SK-N-SH (cell line): ENCODE measurements at regions of chr7 and their contacts with region 1.

Region 1: GRCh38 chr7:39580149-39580874 is 14.1 kb downstream of the YAE1 start:
- DNase-seq: peak; percentile 88
- H3K4me3 ChIP-seq: no peak overlapping the region
- H3K27ac ChIP-seq: 0 out of 4 replicates have a peak overlapping the region, but pooled peaks of 1 of the 2 experiments have one; percentile 6
- H3K4me1 ChIP-seq: no peaks in the 10 kb centered on the region
- H3K27me3 ChIP-seq: no peaks in the 10 kb centered on the region
- CTCF ChIP-seq: peak; percentile 96
- EP300 ChIP-seq: no peak
- RAD21 ChIP-seq: peak; percentile 100

Region 2: GRCh38 chr7:39488467-39489393 is 91.6 kb before region 1 on chr7:
- CTCF ChIA-PET with region 1: no interaction called
- POLR2A ChIA-PET with region 1: no interaction called
- DNase-seq: no peak
- H3K4me3 ChIP-seq: no peak overlapping the region
- H3K27ac ChIP-seq: no peak overlapping the region
- H3K4me1 ChIP-seq: no peaks in the 10 kb centered on the region; a peak in 1 of 4 replicates
- H3K27me3 ChIP-seq: peaks cover 21% of the 10 kb centered on the region; the same call in 1 of the 2 replicates
- CTCF ChIP-seq: no peak
- EP300 ChIP-seq: no peak
- RAD21 ChIP-seq: no peak

Region 3: DNA sequence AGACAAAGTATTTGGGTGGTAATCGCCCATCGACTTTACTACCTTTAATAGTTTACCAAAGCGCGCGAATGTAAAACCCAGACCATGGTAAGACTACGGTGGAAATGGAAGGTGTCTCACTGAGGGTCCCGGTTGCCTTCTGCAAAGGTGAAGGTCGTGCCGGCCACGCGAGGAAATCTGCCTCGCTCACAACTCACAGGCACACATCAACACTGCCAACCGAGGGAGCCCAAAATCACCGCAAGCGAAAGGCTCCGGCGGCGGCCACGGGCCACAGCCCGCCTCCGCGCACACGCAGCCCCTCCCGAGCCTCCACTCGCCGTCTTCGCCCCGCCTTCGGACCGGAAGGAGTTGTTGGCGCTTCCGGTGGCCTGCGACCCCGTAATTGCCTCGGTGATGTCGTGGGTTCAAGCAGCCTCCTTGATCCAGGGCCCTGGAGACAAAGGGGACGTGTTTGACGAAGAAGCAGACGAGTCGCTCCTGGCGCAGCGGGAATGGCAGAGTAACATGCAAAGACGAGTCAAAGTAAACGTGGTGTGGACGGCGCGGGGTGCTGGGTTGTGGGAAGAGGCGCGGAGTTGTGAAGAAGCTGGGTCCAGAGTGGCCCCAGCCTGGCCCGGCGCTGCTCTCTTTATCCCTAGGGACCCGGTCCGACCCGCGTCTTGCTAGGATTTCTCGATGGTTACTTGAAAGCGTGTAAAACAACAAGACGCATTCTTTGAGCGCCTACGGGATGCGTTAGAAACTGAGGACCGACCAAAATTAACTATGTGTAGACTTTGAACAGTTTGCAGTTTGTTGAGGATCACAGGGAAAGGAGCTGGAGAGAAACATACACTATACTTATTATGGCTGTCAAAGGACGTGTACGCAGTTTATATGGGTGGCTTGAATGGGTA is 14.0 kb before region 1 on chr7 and contains the start of gene YAE1:
- CTCF ChIA-PET with region 1: interaction called, 26 read pairs
- POLR2A ChIA-PET with region 1: interaction called, 6 read pairs
- DNase-seq: peak; percentile 98
- H3K4me3 ChIP-seq: peak within 1 kb of the TSS; percentile 72 to 94
- H3K27ac ChIP-seq: peak within 1 kb of the TSS; percentile 69 to 79
- H3K4me1 ChIP-seq: peaks cover 6 to 12% of the 10 kb centered on the region in 2 experiments; a peak in 2 of 4 replicates
- H3K27me3 ChIP-seq: no peaks in the 10 kb centered on the region
- CTCF ChIP-seq: no peak
- EP300 ChIP-seq: peak in 1 of 2 experiments; percentile 26; a peak in 2 of 4 replicates
- RAD21 ChIP-seq: no peak
- polyA plus RNA-seq, gene YAE1: 30.7 and 39.8 TPM in 2 replicates

Region 4: GRCh38 chr7:39623018-39623731 is 42.9 kb after region 1 on chr7 and contains the start of gene RALA:
- CTCF ChIA-PET with region 1: interaction called, 43 read pairs
- POLR2A ChIA-PET with region 1: interaction called, 13 read pairs
- DNase-seq: peak; percentile 99
- H3K4me3 ChIP-seq: peak within 1 kb of the TSS; percentile 93 to 98
- H3K27ac ChIP-seq: peak within 1 kb of the TSS; percentile 93 to 98
- H3K4me1 ChIP-seq: peaks cover 29 to 38% of the 10 kb centered on the region in 2 experiments; a peak in 3 of 4 replicates
- H3K27me3 ChIP-seq: no peaks in the 10 kb centered on the region
- CTCF ChIP-seq: no peak
- EP300 ChIP-seq: peak in 1 of 2 experiments; percentile 27; a peak in 1 of 4 replicates
- RAD21 ChIP-seq: no peak
- polyA plus RNA-seq, gene RALA: 29.0 and 37.4 TPM in 2 replicates

Region 5: DNA sequence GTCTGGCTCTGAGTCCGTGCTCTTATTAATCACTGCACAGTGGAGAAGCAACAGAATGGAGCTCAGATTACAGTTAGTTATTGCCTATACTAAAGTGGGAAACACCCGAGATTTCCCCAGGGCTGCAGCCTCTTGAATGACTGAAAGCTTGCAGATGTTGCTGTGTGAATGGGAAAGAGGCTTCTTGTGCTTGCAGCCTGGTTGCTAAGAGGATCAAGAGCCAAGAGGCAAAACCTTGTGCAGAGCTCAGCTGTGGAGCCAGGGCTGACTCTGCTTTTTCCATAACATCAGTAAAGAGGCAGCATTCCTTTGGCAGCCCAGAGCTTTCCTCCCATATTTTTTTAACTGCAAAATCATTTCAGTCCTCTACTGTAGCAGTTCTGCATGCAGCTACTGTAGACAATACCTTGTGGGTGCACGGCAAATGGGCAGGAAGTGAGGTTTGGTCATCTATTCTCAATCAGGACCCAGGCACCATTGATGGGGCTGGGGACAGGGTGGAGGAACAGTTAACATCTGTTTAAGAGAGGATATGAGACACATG is 129.5 kb after region 1 on chr7:
- CTCF ChIA-PET with region 1: interaction called, 13 read pairs
- POLR2A ChIA-PET with region 1: no interaction called
- DNase-seq: no peak
- H3K4me3 ChIP-seq: no peak overlapping the region
- H3K27ac ChIP-seq: peak overlapping the region in 1 of 2 experiments; percentile 12; a peak in 1 of 4 replicates
- H3K4me1 ChIP-seq: peaks cover 0 to 5% of the 10 kb centered on the region in 2 experiments; a peak in 1 of 4 replicates
- H3K27me3 ChIP-seq: no peaks in the 10 kb centered on the region
- CTCF ChIP-seq: no peak
- EP300 ChIP-seq: no peak
- RAD21 ChIP-seq: no peak

Region 6: GRCh38 chr7:39727231-39728012 is 147.1 kb after region 1 on chr7:
- CTCF ChIA-PET with region 1: interaction called, 563 read pairs
- POLR2A ChIA-PET with region 1: no interaction called
- DNase-seq: no peak
- H3K4me3 ChIP-seq: no peak overlapping the region
- H3K27ac ChIP-seq: no peak overlapping the region
- H3K4me1 ChIP-seq: peaks cover 0 to 3% of the 10 kb centered on the region in 2 experiments; a peak in 1 of 4 replicates
- H3K27me3 ChIP-seq: no peaks in the 10 kb centered on the region
- CTCF ChIP-seq: no peak
- EP300 ChIP-seq: no peak
- RAD21 ChIP-seq: no peak

Region 7: GRCh38 chr7:39761449-39761848 is 181.1 kb after region 1 on chr7:
- CTCF ChIA-PET with region 1: interaction called, 563 read pairs
- POLR2A ChIA-PET with region 1: no interaction called
- DNase-seq: no peak
- H3K4me3 ChIP-seq: no peak overlapping the region
- H3K27ac ChIP-seq: no peak overlapping the region
- H3K4me1 ChIP-seq: peaks cover 0 to 3% of the 10 kb centered on the region in 2 experiments; a peak in 1 of 4 replicates
- H3K27me3 ChIP-seq: no peaks in the 10 kb centered on the region
- CTCF ChIP-seq: no peak
- EP300 ChIP-seq: no peak
- RAD21 ChIP-seq: no peak